Naive thymus-derived CD4-positive, alpha-beta T cell (primary cell): ENCODE measurements at regions of chr1 and their contacts with region 1.

Region 1: DNA sequence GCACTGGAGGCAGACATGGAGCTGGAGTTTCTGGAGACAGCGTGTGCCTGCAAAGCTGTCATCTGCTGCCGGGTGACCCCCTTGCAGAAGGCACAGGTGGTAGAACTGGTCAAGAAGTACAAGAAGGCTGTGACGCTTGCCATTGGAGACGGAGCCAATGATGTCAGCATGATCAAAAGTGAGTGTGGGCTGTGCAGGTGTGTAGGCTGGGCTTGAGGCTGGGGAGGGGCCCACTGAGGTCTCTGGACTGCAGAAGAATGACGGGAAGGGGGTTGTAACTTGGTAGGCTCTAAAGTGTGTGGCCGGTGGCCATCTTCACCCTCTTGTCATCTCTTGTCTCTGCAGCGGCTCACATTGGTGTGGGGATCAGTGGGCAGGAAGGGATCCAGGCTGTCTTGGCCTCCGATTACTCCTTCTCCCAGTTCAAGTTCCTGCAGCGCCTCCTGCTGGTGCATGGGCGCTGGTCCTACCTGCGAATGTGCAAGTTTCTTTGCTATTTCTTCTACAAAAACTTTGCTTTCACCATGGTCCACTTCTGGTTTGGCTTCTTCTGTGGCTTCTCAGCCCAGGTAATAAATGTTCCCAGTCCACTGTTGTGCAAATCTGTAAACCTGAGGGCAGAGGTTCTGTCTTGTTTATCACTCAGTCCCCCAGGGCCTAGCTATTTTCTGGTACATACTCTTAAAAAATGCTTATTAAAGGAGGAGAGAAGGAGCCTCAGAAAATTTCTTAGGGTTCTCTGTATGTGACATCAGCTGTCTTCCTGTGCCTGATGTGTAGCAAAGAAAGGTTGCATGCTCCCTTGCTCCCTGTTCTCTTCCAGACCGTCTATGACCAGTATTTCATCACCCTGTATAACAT is 19.9 kb downstream of the ATP8B2 start:
- DNase-seq: peak; percentile 56 to 79 (median 71)
- ATAC-seq: peak; percentile 55
- H3K4me3 ChIP-seq: peak overlapping the region; percentile 83
- H3K4me3 Mint-ChIP-seq: peak overlapping the region; percentile 79 to 98 (median 92)
- H3K27ac ChIP-seq: peak overlapping the region; percentile 61
- H3K27ac Mint-ChIP-seq: peak overlapping the region; percentile 31 to 100 (median 96)
- H3K4me1 ChIP-seq: peaks cover 60 to 71% of the 10 kb centered on the region in 2 donors
- H3K4me1 Mint-ChIP-seq: peaks cover 64 to 96% (median 73%) of the 10 kb centered on the region in 7 donors
- H3K27me3 ChIP-seq: no peaks in the 10 kb centered on the region
- H3K27me3 Mint-ChIP-seq: no peaks in the 10 kb centered on the region

Region 2: DNA sequence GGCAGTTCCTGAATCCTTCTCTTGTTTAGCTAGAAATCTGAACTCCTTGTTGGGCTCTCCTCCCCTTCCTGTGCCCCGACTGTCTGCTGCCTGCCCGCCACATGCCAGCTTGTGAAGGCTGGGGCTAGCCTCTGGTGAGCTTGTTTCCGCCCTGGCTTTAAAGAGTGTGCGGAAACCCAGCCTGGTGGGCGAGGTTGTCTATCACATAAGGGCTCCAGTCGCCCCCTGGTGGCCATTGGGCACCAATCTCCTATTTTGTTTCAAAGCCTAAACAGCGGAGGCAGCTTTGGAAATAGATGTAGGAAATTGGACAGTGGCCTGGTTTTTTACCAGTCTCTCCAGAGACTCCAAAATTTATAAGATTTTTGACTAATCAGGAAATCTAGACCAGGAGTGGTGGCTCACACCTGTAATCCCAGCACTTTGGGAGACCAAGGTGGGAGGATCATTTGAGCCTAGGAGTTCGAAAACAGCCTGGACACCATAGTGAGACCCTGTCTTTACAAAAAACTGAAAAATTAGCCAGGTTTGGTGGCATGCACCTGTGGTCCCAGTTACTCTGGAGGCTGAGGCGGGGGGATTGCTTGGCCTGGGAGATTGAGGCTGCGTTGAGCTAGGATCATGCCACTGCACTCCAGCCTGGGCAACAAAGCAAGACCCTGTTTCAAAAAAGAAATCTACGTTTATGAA is 10.0 kb before region 1 on chr1:
- CTCF ChIA-PET with region 1: interaction called, 129 read pairs
- POLR2A ChIA-PET with region 1: interaction called, 160 read pairs
- intact Hi-C with region 1: loop called (anchors 1 kb)
- DNase-seq: peak; percentile 74 to 91 (median 87)
- ATAC-seq: peak; percentile 99
- H3K4me3 ChIP-seq: peak overlapping the region; percentile 23
- H3K4me3 Mint-ChIP-seq: peak overlapping the region; percentile 60 to 85 (median 72)
- H3K27ac ChIP-seq: peak overlapping the region; percentile 68
- H3K27ac Mint-ChIP-seq: peak overlapping the region; percentile 87 to 97 (median 95)
- H3K4me1 ChIP-seq: peaks cover 73% of the 10 kb centered on the region in 2 donors
- H3K4me1 Mint-ChIP-seq: peaks cover 50 to 88% (median 77%) of the 10 kb centered on the region in 7 donors
- H3K27me3 ChIP-seq: no peaks in the 10 kb centered on the region
- H3K27me3 Mint-ChIP-seq: no peaks in the 10 kb centered on the region